ENCODE measurements at regions of chr5 and their contacts with region 1.

Region 1: GRCh38 chr5:147558826-147559225 is 49.0 kb upstream of the DPYSL3 start:
- DNase-seq: peak; percentile 86

Region 2: DNA sequence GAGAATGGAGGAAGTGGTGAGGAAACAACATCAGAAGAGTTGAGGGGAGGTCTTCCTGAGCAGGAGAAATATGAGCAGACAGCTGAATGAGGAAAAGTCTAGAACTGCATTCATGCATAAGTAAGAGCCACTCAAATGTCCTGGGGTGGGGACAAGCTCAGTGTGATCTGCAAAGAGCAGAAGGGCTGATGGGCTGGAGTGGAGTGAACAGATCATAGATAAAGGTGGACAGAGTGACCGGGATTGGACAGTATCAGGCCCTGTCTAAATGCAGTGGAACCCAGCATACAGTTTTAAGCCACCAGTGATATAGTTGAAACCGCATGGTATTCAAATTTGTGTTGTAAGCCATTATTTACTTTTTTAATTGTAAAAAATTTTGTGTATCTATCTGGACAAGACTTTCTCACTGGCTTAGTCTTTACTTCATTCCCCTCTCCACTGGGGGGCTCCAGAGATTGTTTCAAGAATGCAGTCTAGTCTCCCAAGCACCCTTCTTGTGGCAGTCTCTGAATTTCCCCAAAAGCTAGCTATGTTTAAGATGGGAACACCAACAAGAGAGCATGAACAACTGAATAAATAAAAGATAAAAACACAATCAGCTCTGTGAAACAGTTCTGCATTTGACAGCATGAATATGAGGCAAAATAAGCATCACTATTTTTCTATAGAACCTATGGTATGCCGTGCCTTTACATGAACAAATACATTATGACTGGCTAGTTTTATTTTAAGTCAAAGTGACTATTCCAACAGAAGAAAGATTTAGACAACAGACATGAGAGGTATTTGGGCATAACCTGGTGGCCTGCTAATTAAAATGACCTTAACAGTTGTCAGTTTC is 334.7 kb before region 1 on chr5:
- intact Hi-C with region 1: loop called in 1 of 2 experiments (anchors 5 kb)
- DNase-seq: no peak

Region 3: DNA sequence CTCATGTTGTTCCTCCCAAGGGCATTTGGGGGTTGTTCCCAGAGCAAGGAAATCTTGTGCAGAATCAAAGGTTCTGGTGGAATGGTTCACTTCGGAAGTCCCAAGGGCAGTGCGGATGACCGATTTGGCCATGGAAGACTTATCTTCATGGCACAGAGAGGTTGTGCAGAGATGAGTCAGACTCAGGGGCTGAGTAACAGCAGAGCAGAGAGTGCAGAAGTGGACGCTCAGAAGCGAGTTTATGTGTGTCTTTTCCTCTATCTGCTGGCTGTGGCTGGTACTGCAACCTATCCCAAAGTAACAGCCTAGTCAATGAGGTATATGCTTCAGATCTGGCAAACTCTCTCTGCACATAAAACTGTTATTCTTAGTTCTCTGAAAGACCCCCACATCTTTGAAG is 167.0 kb before region 1 on chr5:
- intact Hi-C with region 1: loop called in 1 of 2 experiments (anchors 5 kb)
- DNase-seq: peak; percentile 87

Region 4: GRCh38 chr5:147453875-147454814 is 104.7 kb before region 1 on chr5:
- intact Hi-C with region 1: loop called in 1 of 2 experiments (anchors 5 kb)
- DNase-seq: peak; percentile 97

Region 5: DNA sequence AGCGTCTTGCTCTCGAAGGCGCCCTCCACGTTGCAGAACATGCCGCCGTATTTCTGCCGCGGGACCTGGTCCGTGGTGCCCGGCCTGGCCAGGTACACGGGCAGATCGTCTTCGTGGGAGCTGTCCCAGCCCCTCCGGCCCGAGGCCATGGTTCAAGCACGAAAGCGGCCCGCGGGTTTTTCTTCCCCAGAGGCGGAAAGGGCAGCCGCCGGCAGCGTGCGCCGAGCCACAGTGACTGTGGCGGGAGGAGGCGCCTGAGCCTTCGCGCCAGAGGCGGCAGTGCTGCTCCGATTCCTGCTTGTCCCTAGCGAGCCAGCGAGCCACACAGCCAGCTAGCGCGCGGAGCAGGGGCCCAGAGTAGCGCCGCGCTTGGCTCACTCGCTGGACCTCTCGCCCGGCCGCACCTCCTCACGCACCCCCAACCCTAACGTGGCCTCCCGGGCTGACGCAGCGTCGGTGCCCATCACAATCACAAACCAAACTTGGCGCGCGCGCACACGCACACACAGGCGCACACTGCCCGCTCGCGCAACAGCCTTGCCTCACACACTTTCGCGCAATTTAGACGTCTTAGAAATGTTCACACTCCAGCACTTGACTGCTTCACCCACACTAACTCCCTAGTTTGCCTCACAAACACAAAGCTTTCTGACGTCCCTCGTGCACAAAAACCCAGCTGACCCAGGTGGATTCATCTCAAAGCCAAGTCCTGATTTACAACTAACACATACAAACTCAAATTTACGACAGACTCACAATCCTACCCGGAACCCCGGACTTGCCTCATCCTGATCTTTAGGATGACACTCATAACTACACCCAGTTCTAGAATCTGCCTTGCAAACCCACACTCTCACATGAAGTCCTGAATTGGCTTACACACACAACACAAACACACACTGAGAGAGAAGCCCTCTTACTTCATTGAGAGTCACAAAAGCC is 48.8 kb before region 1 on chr5 and contains the start of gene DPYSL3:
- intact Hi-C with region 1: loop called in 1 of 2 experiments (anchors 5 kb)
- DNase-seq: peak; percentile 95
- total RNA-seq, gene DPYSL3: 401 to 418 TPM